ENCODE measurements at regions of chr1 and their contacts with region 1.

Region 1: DNA sequence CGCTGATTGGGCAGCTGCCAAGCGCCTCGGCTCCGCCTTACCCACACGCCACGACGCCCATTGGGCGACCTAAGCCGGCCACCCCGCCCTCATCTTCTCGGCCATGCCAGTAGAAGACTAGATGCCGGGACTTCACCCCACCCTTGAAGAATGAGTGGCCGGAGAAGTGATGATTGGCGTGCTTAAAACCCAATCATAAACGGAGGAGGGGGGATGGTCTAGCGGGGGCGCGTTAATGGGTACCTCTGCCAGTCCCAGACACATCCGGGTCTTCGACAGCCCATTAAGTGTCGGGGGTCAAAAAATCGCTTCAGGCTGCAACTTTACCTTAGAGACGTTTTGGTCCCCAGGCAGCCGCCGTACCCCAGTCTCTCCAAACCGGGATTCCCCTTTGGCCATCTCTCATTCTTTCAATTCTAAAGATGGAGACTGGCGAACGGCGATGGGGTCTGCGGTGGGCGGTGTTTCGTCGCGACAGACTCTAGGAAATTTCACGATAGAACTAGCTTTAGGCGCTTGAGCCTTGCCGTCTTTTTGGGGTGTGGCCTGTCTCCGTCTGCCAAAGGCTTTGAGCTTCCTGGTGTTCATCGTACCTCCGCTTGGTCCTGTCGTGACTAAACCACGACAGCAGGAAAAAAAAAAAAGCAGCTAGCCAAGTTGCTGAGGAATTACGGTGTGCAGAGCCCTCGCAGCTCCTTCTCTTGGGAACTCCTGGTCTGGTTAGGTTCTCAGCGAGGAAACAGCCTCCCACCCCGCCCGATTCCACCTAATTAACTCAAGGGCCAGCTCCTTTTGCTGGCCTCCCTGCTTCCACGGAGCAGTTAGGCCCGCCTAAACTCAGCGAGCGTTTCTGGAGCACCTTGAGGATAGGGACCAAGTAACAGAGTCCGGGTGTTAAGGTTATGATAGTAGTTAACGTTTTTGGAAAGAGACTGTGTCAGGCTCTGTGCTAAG is at the start of gene GATAD2B:
- DNase-seq: peak; percentile 94 to 100 (median 99)
- ATAC-seq: peak; percentile 92
- H3K4me3 Mint-ChIP-seq: peak within 1 kb of the TSS; percentile 80 to 97 (median 94)
- H3K27ac Mint-ChIP-seq: peak within 1 kb of the TSS; percentile 93 to 99 (median 97)
- H3K4me1 Mint-ChIP-seq: peaks cover 25 to 56% (median 45%) of the 10 kb centered on the region in 4 donors
- H3K27me3 Mint-ChIP-seq: peaks cover 0 to 3% (median 0%) of the 10 kb centered on the region in 5 donors
- polyA plus RNA-seq, gene GATAD2B: 4.4 to 5.3 (median 5.2) TPM

Region 2: GRCh38 chr1:153717330-153717729 is 205.9 kb before region 1 on chr1:
- POLR2A ChIA-PET with region 1: no interaction called
- DNase-seq: no peak
- ATAC-seq: no peak
- H3K4me3 Mint-ChIP-seq: no peak overlapping the region
- H3K27ac Mint-ChIP-seq: no peak overlapping the region
- H3K4me1 Mint-ChIP-seq: no peaks in the 10 kb centered on the region
- H3K27me3 Mint-ChIP-seq: peaks cover 2 to 11% (median 5%) of the 10 kb centered on the region in 5 donors

Region 3: GRCh38 chr1:153849487-153850185 is 73.6 kb before region 1 on chr1:
- POLR2A ChIA-PET with region 1: no interaction called
- DNase-seq: peak in 2 of 10 donors; percentile 1 to 9
- ATAC-seq: peak; percentile 42 to 45
- H3K4me3 Mint-ChIP-seq: peak overlapping the region in 6 of 10 donors; percentile 0 to 58 (median 39)
- H3K27ac Mint-ChIP-seq: peak overlapping the region; percentile 36 to 89 (median 82)
- H3K4me1 Mint-ChIP-seq: peaks cover 20 to 60% (median 48%) of the 10 kb centered on the region in 4 donors
- H3K27me3 Mint-ChIP-seq: no peaks in the 10 kb centered on the region

Region 4: DNA sequence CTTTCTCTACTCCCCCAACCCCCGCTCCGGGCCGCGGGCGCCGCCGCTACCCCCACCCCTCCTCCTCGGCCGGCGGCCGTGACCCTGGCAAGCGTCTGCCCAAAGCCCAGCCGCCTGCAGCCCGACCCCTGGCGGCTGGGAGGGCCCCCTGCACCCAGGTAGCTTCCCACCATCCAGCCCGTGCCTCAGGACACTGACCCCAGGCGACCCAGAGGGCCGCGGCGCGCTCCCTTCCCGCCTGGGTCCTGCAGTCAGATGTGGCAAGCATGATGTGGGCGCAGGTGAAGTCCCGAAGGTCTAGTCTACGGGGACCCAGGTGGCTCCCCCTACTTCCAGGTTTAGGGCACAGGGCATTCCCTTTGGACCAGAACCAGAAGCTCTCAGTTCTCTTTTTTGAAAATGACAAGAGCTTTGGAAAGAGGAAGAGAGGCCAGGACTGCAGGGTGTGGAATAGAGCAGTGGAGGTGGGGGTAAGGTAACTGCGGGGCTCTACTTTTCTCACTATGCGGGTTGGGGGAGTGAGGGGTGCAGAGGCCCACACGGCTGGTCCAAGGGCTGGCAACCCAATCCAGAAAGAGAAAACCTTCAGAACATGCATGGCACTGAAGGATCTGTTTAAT is 23.5 kb after region 1 on chr1 and contains the start of gene DENND4B:
- POLR2A ChIA-PET with region 1: interaction called, 211 read pairs
- DNase-seq: peak; percentile 46 to 85 (median 70)
- ATAC-seq: peak; percentile 57 to 60
- H3K4me3 Mint-ChIP-seq: peak within 1 kb of the TSS; percentile 91 to 98 (median 94)
- H3K27ac Mint-ChIP-seq: peak within 1 kb of the TSS; percentile 92 to 98 (median 95)
- H3K4me1 Mint-ChIP-seq: peaks cover 32 to 63% (median 47%) of the 10 kb centered on the region in 4 donors
- H3K27me3 Mint-ChIP-seq: no peaks in the 10 kb centered on the region
- polyA plus RNA-seq, gene DENND4B: 12.0 to 21.2 (median 19.0) TPM

Region 5: GRCh38 chr1:153958111-153958960 is 35.1 kb after region 1 on chr1 and contains the start of gene CRTC2:
- POLR2A ChIA-PET with region 1: interaction called, 42 read pairs
- DNase-seq: peak; percentile 91 to 98 (median 96)
- ATAC-seq: peak; percentile 84 to 88
- H3K4me3 Mint-ChIP-seq: peak within 1 kb of the TSS; percentile 86 to 100 (median 98)
- H3K27ac Mint-ChIP-seq: peak within 1 kb of the TSS; percentile 85 to 98 (median 96)
- H3K4me1 Mint-ChIP-seq: peaks cover 37 to 79% (median 63%) of the 10 kb centered on the region in 4 donors
- H3K27me3 Mint-ChIP-seq: no peaks in the 10 kb centered on the region
- polyA plus RNA-seq, gene CRTC2: 21.4 to 49.6 (median 27.1) TPM

Region 6: DNA sequence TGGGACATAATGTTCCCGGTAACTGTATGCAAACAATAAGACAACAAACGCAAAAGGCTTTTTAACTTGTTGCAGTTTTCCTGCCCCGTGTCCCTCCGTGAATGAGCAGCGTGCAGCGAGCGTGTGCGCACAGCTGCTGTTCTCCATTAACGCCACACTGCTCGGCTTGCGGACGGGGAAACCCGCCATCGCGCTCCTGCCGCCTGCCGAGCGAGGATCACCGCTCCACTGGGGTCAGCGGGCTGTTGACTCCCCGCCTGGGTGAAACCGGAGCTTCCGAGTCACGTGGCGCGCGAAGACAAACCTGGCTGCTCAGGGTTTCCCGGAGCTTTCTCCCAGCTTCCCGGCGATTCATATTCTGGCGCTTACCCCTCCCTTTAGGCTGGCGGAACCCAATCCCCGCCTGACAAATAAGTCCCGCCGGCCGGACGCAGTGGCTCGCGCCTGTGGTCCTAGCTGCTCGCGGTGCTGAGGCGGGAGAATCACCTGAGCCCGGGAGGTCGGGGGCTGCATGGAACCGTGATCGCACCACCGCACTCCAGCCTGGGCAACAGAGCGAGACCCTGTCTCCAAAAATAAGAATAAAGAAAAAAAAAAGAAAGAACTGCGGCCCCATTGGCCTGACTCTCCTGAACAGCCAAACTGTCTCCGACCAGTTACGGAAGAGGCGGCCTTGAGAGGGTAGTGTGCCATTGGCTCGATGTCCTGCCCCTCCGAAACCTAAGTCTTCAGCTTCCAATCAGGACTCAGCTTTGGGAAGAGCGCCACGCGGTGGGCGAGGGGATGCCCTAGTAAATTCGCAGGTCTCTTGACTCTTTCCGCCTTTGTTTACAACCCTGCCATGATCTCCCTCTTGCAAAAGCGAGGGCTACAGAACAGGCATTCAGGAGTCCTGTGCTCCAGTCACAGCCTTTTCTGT is 44.1 kb after region 1 on chr1 and contains the start of gene CREB3L4:
- POLR2A ChIA-PET with region 1: interaction called, 46 read pairs
- DNase-seq: peak; percentile 68 to 93 (median 83)
- ATAC-seq: peak; percentile 88 to 91
- H3K4me3 Mint-ChIP-seq: peak within 1 kb of the TSS; percentile 87 to 97 (median 94)
- H3K27ac Mint-ChIP-seq: peak within 1 kb of the TSS; percentile 92 to 99 (median 95)
- H3K4me1 Mint-ChIP-seq: peaks cover 31 to 68% (median 64%) of the 10 kb centered on the region in 4 donors
- H3K27me3 Mint-ChIP-seq: no peaks in the 10 kb centered on the region
- polyA plus RNA-seq, gene CREB3L4: 4.3 to 6.0 (median 4.4) TPM

Region 7: GRCh38 chr1:153977250-153978240 is 54.3 kb after region 1 on chr1 and contains the start of gene JTB:
- POLR2A ChIA-PET with region 1: interaction called, 32 read pairs
- DNase-seq: peak; percentile 73 to 92 (median 78)
- ATAC-seq: peak; percentile 96
- H3K4me3 Mint-ChIP-seq: peak within 1 kb of the TSS; percentile 91 to 99 (median 97)
- H3K27ac Mint-ChIP-seq: peak within 1 kb of the TSS; percentile 87 to 99 (median 96)
- H3K4me1 Mint-ChIP-seq: peaks cover 11 to 42% (median 37%) of the 10 kb centered on the region in 4 donors
- H3K27me3 Mint-ChIP-seq: no peaks in the 10 kb centered on the region
- polyA plus RNA-seq, gene JTB: 302 to 384 (median 322) TPM

Region 8: GRCh38 chr1:154220071-154220969 is 297.1 kb after region 1 on chr1 and contains the start of gene UBAP2L:
- POLR2A ChIA-PET with region 1: interaction called, 19 read pairs
- DNase-seq: peak; percentile 93 to 99 (median 99)
- ATAC-seq: peak; percentile 87
- H3K4me3 Mint-ChIP-seq: peak within 1 kb of the TSS; percentile 83 to 99 (median 96)
- H3K27ac Mint-ChIP-seq: peak within 1 kb of the TSS; percentile 99 to 100 (median 100)
- H3K4me1 Mint-ChIP-seq: peaks cover 44 to 74% (median 74%) of the 10 kb centered on the region in 4 donors
- H3K27me3 Mint-ChIP-seq: peaks cover 0 to 2% (median 0%) of the 10 kb centered on the region in 5 donors
- polyA plus RNA-seq, gene UBAP2L: 42.0 to 70.5 (median 54.8) TPM

Measured in naive thymus-derived CD8-positive, alpha-beta T cell (primary cell).